ENCODE measurements at regions of chr3 and their contacts with region 1.

Region 1: GRCh38 chr3:190017521-190018288 is 103.0 kb downstream of the P3H2 start:
- DNase-seq: peak; percentile 70
- H3K4me3 ChIP-seq: no peak overlapping the region
- H3K27ac ChIP-seq: peak overlapping the region; percentile 19
- H3K4me1 ChIP-seq: peaks cover 42% of the 10 kb centered on the region
- H3K27me3 ChIP-seq: no peaks in the 10 kb centered on the region
- CTCF ChIP-seq: peak; percentile 41 to 53

Region 2: DNA sequence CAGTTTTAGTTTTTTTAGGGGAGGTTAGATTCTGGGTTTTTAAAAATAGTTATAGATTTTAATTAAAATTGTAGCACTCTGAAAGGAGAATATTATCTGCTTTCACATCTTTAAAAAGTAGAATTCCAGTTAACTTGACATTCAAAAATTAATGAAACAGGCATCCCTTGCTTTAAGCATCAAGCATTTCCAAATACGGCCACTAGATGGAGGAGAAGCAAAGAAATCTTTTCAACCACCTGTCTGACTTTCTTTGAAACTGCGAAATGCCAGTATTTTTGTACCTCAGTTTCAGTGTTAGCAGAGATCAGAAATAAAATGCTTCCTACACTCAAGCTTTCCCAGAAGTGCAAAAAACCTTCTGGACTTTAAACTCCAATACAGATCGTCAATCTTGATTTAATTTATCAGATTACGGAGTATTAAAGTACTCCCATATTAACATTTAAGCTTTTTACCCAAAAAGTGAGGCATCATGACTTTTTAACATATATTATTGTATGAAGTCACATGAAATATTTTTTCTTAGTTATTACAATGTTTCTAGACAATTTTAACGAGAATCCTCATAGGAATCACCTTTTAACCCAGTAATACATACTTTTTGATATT is 50.3 kb before region 1 on chr3:
- CTCF ChIA-PET with region 1: interaction called, 4 read pairs
- dilution Hi-C with region 1: no loop called
- in situ Hi-C with region 1: no loop called
- intact Hi-C with region 1: loop called (anchors 1 kb)
- DNase-seq: peak; percentile 41
- H3K4me3 ChIP-seq: no peak overlapping the region
- H3K27ac ChIP-seq: no peak overlapping the region
- H3K4me1 ChIP-seq: peaks cover 6% of the 10 kb centered on the region
- H3K27me3 ChIP-seq: no peaks in the 10 kb centered on the region
- CTCF ChIP-seq: peak; percentile 69 to 90

Region 3: DNA sequence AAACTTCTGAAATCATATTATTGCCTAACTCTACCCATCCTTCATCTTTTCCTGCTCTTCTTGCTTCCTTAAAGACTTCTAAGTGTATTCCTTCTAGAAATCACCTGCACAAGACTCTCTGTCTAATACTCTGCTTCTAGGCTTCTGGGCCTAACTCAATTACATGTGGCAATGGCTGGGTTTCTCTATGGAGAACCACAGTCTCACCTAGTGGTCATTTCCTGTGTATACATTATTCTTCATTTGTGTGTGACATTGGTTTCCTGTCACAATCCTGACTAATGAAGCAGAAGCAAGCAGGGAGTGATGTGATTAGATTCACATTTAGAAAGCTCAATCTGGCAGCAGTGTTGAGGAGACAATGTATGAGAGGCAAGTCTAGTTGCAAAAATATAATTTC is 321.4 kb after region 1 on chr3:
- CTCF ChIA-PET with region 1: no interaction called
- dilution Hi-C with region 1: no loop called
- in situ Hi-C with region 1: no loop called
- intact Hi-C with region 1: loop called (anchors 5 kb)
- DNase-seq: peak; percentile 78
- H3K4me3 ChIP-seq: no peak overlapping the region
- H3K27ac ChIP-seq: peak overlapping the region; percentile 77
- H3K4me1 ChIP-seq: peaks cover 33% of the 10 kb centered on the region
- H3K27me3 ChIP-seq: no peaks in the 10 kb centered on the region
- CTCF ChIP-seq: peak; percentile 26 to 43